ENCODE measurements at regions of chr1 and their contacts with region 1.

Region 1: DNA sequence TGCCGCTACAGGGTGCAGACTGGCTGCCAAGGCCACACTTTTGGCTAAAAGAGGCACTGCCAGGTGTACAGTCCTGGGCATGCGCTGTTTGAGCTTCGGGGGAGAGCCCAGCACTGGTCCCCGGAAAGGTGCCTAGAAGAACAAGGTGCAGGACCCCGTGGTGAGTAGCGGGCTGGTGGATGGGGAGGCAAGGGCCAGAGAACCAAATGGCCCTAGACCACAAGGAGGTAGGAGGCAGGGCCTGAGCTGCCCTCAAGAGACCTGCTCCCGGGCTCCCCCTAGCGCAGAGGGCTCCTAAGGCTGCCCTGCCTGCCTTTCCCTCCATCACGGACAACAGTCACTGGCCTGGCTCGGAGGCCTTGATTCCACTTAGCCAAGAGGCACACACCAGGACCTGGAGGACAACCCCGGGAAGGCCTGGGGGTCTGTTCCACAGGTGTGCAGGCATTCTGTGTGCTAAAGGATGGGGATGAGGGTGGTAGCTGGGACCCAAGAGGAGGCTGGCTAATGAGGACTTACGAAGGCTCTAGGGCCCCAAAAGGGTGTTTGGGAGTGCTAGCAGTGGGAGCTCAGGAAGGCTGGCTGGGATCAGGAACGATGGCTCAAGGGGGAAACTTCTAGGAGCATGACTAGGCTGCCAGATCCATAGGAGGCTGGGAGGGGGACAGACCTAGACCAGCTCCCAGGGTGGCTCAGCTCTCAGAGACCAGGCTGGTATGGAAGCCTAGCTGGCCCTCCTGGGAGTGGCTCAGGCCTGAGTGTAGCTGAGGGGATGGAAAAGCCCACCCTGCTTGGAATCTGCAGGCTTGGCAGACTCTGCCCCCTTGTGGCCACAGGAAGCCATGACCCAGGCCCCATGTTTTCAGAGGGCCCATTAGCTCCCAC is 742 bp downstream of the ARTN start:
- DNase-seq: peak; percentile 44 to 88 (median 67)
- ATAC-seq: peak; percentile 87
- H3K4me3 ChIP-seq: peak overlapping the region; percentile 21 to 36
- H3K27ac ChIP-seq: no peak overlapping the region
- H3K4me1 ChIP-seq: peaks cover 8 to 39% of the 10 kb centered on the region in 2 donors
- H3K27me3 ChIP-seq: peaks cover 0 to 45% of the 10 kb centered on the region in 2 donors
- CTCF ChIP-seq: peak; percentile 81 to 93

Region 2: DNA sequence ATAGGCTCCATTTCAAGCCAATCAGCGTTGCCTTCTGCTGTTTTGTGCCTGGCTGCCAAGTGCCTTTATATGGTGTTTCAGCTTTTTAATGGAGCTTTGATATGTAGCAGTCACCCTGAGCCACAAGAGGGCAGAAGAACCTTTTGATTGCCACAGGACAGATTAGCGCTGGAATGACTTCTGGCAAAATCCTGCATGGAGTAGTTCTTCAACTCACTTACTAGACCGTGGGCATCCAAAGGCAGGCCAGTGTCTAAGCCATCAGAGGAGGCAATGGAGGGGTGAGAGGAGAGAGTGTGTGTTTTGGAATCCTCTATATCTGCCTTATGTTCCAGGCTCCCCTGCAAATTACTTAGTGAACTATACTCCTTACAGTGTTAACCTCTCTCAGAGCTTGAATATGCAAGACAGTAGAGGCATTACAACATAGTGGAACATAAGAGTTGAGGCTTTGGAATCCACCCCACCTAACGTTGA is 170.8 kb before region 1 on chr1:
- intact Hi-C with region 1: loop called (anchors 2 to 10 kb)
- DNase-seq: peak in 3 of 4 donors; percentile 43 to 89 (median 80)
- ATAC-seq: peak; percentile 97
- H3K4me3 ChIP-seq: no peak overlapping the region
- H3K27ac ChIP-seq: no peak overlapping the region
- H3K4me1 ChIP-seq: peaks cover 0 to 7% of the 10 kb centered on the region in 2 donors
- H3K27me3 ChIP-seq: no peaks in the 10 kb centered on the region
- CTCF ChIP-seq: peak; percentile 66 to 77